ENCODE measurements at regions of chr1 and their contacts with region 1.

Region 1: GRCh38 chr1:33616773-33617172 is 144.3 kb downstream of the ZSCAN20 start:
- DNase-seq: no peak
- H3K4me3 ChIP-seq: no peak overlapping the region
- CTCF ChIP-seq: no peak

Region 2: DNA sequence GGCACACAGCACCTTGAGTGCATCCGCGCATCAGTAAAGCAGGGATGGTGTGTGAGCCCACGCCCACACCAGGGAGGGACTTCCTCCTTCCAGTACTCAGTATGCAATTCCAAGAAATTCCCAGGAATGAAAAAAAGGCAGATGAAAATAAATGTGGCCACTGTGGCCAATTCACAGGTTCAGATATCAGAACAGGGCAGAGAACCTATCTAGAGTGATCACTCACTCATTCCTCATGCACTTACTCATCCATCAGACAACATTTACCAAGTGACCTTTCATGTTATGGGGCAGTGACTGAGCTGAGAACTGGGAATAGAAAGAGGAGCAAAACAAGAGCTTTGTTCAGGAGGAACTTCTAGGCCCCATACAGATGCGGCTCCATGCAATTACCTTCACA is 30.7 kb before region 1 on chr1:
- CTCF ChIA-PET with region 1: interaction called, 13 read pairs
- POLR2A ChIA-PET with region 1: no interaction called
- DNase-seq: peak; percentile 16
- H3K4me3 ChIP-seq: no peak overlapping the region
- CTCF ChIP-seq: no peak